Esophagus muscularis mucosa (tissue), 4 donors: ENCODE measurements at regions of chr7 and their contacts with region 1.

Region 1: DNA sequence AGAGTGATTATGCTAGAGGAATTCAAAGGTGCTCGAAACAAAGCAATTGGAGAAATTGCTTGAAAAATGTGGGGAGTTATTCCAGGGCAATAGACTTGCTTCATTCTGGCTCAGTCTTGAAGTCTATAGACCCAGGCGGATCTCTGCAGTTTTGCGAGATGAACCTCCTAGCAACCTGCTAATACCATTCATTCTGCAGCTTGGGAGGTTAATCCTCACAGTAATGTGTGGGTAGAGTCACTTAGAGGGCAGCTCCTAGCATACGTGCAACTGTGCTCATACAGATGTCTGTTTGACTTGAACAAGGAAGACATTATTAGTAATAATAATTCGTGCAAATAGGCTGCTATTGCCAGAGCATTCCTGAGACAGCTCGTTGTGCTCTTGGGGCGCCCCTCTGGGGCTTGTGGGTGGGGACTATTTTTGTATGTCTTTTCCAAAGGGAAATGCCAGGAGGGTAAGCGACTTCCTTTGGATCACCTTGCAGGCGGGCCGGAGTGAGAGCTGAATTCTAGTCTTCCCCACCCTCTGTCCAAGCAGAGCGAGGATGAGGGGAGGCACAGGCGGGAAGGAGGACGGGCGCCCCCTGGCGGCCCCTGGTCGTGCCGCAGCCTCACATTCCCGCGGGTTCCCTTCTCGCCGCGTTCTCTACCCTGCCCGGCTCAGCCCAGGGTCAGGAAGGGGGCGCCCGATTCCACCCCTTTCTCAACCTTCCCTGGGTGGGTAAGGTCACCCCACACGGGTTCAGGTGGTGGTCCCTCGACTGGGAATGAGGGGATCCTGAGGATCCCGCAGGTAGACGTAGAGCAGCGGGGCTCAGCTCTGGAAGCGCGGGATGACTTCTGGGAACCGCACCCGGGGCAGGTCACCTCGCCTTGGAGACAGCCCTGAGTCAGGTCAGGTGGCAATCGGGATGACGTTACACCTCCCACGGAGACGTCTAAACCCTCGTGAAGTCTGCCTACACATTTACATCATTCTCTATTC is 241.5 kb downstream of the PHTF2 start:
- DNase-seq: no peak
- H3K4me3 ChIP-seq: no peak overlapping the region
- H3K27ac ChIP-seq: no peak overlapping the region
- H3K4me1 ChIP-seq: peaks cover 0 to 9% (median 9%) of the 10 kb centered on the region in 4 donors
- H3K27me3 ChIP-seq: no peaks in the 10 kb centered on the region
- CTCF ChIP-seq: peak; percentile 67 to 82 (median 69)
- EP300 ChIP-seq: no peak
- POLR2A ChIP-seq: no peak

Region 2: DNA sequence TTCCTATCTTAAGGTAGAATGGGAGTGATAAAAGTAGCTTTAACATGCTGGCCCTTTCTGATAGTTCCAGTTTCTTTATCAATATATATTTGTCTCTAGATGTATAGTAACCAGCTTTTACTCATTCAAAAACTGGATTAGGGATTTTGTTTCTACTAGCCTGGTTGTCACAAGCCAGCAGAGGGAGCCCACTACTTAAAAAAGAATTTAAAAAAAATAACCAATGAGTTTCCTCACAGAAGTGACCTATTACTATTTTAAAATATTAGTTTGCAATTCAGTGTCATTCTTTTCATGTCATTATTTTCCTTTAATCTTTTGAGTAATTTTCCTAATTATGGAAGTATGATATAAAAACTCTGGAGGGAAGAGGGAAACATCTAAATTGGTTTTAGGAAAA is 99.4 kb before region 1 on chr7:
- intact Hi-C with region 1: loop called (anchors 5 kb)
- DNase-seq: no peak
- H3K4me3 ChIP-seq: no peak overlapping the region
- H3K27ac ChIP-seq: no peak overlapping the region
- H3K4me1 ChIP-seq: no peaks in the 10 kb centered on the region
- H3K27me3 ChIP-seq: no peaks in the 10 kb centered on the region
- CTCF ChIP-seq: peak; percentile 54 to 62 (median 54)
- EP300 ChIP-seq: no peak
- POLR2A ChIP-seq: no peak

Region 3: GRCh38 chr7:78024591-78024990 is 15.5 kb before region 1 on chr7:
- intact Hi-C with region 1: no loop called
- DNase-seq: no peak
- H3K4me3 ChIP-seq: no peak overlapping the region
- H3K27ac ChIP-seq: no peak overlapping the region
- H3K4me1 ChIP-seq: peaks cover 7 to 13% (median 12%) of the 10 kb centered on the region in 4 donors
- H3K27me3 ChIP-seq: no peaks in the 10 kb centered on the region
- CTCF ChIP-seq: no peak
- EP300 ChIP-seq: no peak
- POLR2A ChIP-seq: no peak